ENCODE measurements at regions of chr2 and their contacts with region 1.

Region 1: GRCh38 chr2:105840931-105841330 is 96.2 kb downstream of the NCK2 start:
- DNase-seq: no peak
- ATAC-seq: no peak
- H3K4me3 ChIP-seq: no peak overlapping the region
- H3K4me3 Mint-ChIP-seq: peak overlapping the region; percentile 34
- H3K27ac ChIP-seq: no peak overlapping the region
- H3K27ac Mint-ChIP-seq: peak overlapping the region; percentile 74
- H3K4me1 ChIP-seq: peaks cover 78% of the 10 kb centered on the region
- H3K4me1 Mint-ChIP-seq: peaks cover 98% of the 10 kb centered on the region
- H3K27me3 ChIP-seq: no peaks in the 10 kb centered on the region
- H3K27me3 Mint-ChIP-seq: no peaks in the 10 kb centered on the region
- CTCF ChIP-seq: no peak

Region 2: GRCh38 chr2:105812180-105813044 is 28.5 kb before region 1 on chr2:
- CTCF ChIA-PET with region 1: no interaction called
- POLR2A ChIA-PET with region 1: no interaction called
- intact Hi-C with region 1: no loop called
- DNase-seq: no peak
- ATAC-seq: no peak
- H3K4me3 ChIP-seq: no peak overlapping the region
- H3K4me3 Mint-ChIP-seq: peak overlapping the region; percentile 48
- H3K27ac ChIP-seq: no peak overlapping the region
- H3K27ac Mint-ChIP-seq: peak overlapping the region; percentile 98
- H3K4me1 ChIP-seq: peaks cover 81% of the 10 kb centered on the region
- H3K4me1 Mint-ChIP-seq: peaks cover 96% of the 10 kb centered on the region
- H3K27me3 ChIP-seq: no peaks in the 10 kb centered on the region
- H3K27me3 Mint-ChIP-seq: no peaks in the 10 kb centered on the region
- CTCF ChIP-seq: no peak

Region 3: DNA sequence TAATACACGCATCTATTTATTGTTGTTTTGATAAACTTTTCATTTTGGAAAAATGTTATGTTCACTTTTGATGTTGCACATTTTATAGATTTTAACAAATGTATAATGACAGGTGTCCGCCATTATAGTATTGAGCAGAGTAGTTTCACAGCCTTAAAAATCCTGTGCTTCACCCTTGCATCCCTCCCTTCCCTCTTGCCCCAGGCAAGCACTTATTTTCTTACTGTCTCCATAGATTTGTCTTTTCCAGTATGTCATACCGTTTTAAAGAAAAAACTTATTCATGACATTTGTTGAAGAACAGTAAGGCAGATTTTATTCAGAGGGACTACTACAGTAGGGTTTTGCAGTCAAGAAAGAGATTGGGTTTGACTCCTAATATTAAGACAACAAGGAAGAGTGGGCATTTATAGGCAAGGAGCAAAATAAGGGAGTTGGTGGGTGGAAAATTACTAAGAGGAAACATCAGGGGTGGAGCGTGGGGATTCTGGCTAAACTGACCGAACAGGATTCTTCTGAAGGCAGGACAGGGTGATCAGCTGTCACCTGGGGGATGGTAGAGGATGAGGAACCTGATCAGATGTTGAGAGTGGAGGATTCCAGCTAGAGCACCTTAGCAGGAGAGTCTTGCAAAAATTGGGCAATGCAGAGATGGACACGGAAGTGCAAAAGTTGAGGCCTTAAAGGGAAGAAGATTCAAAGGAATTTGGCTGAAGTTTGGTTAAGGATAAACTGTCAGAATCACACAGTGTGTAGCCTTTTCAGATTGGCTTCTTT is 12.6 kb after region 1 on chr2:
- CTCF ChIA-PET with region 1: interaction called, 4 read pairs
- POLR2A ChIA-PET with region 1: interaction called, 5 read pairs
- intact Hi-C with region 1: loop called in 1 of 2 experiments (anchors 2 kb)
- DNase-seq: no peak
- ATAC-seq: no peak
- H3K4me3 ChIP-seq: no peak overlapping the region
- H3K4me3 Mint-ChIP-seq: peak overlapping the region; percentile 11
- H3K27ac ChIP-seq: peak overlapping the region; percentile 21 to 38
- H3K27ac Mint-ChIP-seq: peak overlapping the region; percentile 97
- H3K4me1 ChIP-seq: peaks cover 69% of the 10 kb centered on the region
- H3K4me1 Mint-ChIP-seq: peaks cover 90% of the 10 kb centered on the region
- H3K27me3 ChIP-seq: no peaks in the 10 kb centered on the region
- H3K27me3 Mint-ChIP-seq: no peaks in the 10 kb centered on the region
- CTCF ChIP-seq: no peak